ENCODE measurements at regions of chr11 and their contacts with region 1.

Region 1: GRCh38 chr11:9716275-9717039 is 52.6 kb downstream of the SWAP70 start:
- DNase-seq: no peak
- H3K4me3 ChIP-seq: no peak overlapping the region
- H3K27me3 ChIP-seq: no peaks in the 10 kb centered on the region
- CTCF ChIP-seq: no peak

Region 2: DNA sequence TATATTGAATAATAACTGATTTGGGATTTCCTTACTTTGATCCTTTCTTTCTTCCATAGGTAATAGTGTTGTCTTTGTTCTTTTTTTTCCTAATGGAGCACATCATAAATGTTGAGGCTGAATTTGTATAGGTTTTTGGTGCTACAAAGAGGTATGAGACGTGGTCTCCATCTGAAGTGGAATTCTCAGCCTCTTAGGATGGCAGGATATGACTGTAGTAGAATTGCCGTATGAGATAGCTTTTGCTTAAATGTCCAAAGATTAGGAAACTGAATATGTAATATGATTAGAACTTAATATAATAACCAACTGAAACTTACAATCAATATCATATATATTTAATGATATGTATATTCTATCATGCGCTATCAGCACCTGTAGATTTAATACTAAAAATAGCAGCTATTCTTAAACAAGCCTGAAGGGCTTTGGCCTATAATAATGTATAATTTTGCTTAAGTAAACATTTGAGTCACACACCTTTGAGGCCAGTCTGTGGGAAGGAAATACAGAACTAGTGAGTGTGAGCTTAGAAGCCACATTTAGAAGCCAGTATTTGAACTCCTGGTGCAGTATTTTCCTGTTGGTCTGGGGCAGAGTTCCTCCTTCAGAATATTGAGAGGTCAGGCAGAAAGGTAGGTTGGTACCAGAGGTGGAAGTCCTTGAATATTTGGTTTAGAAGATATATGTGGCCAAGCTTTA is 10.0 kb after region 1 on chr11:
- CTCF ChIA-PET with region 1: interaction called, 11 read pairs
- POLR2A ChIA-PET with region 1: no interaction called
- DNase-seq: no peak
- H3K4me3 ChIP-seq: no peak overlapping the region
- H3K27me3 ChIP-seq: no peaks in the 10 kb centered on the region
- CTCF ChIP-seq: no peak

Region 3: DNA sequence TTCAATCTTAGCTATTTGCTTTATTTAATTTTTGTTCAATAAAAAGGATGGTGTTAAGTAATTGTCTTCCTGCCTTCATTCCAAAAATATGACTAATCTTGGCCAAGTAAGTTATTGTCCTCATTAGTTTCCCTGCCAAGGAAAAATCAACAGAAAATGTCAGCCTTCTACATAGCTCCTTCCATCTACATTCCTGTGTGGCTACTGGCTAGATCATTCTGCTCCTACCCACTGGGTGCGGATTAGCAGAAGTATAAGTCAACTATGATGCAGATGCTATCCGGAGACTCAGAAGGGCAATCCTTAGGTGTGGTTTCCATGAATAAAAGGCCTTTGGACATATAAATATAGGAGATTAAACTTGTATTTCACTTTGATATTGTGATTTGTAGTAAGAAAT is 423.2 kb after region 1 on chr11:
- CTCF ChIA-PET with region 1: no interaction called
- POLR2A ChIA-PET with region 1: interaction called, 18 read pairs
- DNase-seq: peak; percentile 41
- H3K4me3 ChIP-seq: no peak overlapping the region
- H3K27me3 ChIP-seq: no peaks in the 10 kb centered on the region
- CTCF ChIP-seq: no peak